ENCODE measurements at regions of chr21 and their contacts with region 1.

Region 1: DNA sequence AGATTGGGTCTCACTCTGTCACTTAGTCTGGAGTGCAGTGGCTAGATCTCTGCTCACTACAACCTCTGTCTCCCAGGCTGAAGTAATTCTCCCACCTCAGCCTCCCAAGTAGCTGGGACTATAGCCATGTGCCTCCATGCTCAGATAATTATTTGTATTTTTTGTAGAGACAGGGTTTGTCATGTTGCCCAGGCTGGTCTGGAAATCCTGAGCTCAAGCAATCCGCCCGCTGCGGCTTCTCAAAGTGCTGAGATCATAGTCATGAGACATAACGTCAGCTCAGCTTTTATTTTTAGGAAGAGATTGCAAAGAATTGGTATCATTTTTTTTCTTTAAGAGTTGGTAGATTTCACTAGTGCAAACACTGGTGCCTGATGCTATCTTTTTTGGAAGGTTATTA is 244.9 kb downstream of the DSCAM start:
- DNase-seq: no peak
- H3K4me3 ChIP-seq: no peak overlapping the region
- H3K27ac ChIP-seq: no peak overlapping the region
- H3K4me1 ChIP-seq: no peaks in the 10 kb centered on the region
- H3K27me3 ChIP-seq: no peaks in the 10 kb centered on the region
- CTCF ChIP-seq: no peak
- POLR2A ChIP-seq: no peak

Region 2: GRCh38 chr21:39221997-39222486 is 1380.0 kb before region 1 on chr21:
- intact Hi-C with region 1: no loop called
- DNase-seq: no peak
- H3K4me3 ChIP-seq: no peak overlapping the region
- H3K27ac ChIP-seq: no peak overlapping the region
- H3K4me1 ChIP-seq: no peaks in the 10 kb centered on the region
- H3K27me3 ChIP-seq: no peaks in the 10 kb centered on the region
- CTCF ChIP-seq: no peak
- POLR2A ChIP-seq: no peak

Region 3: GRCh38 chr21:40547906-40548513 is 54.1 kb before region 1 on chr21:
- intact Hi-C with region 1: loop called (anchors 10 kb)
- DNase-seq: no peak
- H3K4me3 ChIP-seq: no peak overlapping the region
- H3K27ac ChIP-seq: no peak overlapping the region
- H3K4me1 ChIP-seq: no peaks in the 10 kb centered on the region
- H3K27me3 ChIP-seq: no peaks in the 10 kb centered on the region
- CTCF ChIP-seq: no peak
- POLR2A ChIP-seq: no peak

Region 4: GRCh38 chr21:40622523-40622922 is 20.4 kb after region 1 on chr21:
- intact Hi-C with region 1: no loop called
- DNase-seq: no peak
- H3K4me3 ChIP-seq: no peak overlapping the region
- H3K27ac ChIP-seq: no peak overlapping the region
- H3K4me1 ChIP-seq: no peaks in the 10 kb centered on the region
- H3K27me3 ChIP-seq: no peaks in the 10 kb centered on the region
- CTCF ChIP-seq: no peak
- POLR2A ChIP-seq: no peak

Region 5: DNA sequence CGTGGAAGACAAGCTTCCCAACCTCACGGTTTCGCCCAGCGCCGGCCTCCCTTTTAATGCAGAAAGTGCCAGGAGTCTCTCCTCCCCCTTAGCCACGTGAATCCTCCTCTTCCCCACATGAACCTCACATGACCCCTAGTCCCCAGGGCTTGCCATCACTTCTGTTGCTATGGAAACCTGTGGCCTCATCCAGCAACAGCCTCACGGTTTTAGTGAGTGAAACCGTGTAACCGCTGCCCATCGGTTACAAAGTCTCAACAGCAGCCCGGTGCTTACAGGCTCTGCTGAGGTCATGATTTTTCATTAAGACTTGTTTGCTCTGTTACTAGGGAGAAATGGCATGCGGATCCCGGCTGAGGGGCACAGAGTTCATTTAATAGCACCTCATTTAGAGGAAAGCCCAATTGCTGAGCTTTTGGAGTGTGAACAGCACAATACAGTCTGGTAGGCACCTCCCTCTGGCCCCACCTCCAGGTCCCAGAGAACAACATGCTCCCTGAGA is 422.7 kb after region 1 on chr21:
- intact Hi-C with region 1: no loop called
- DNase-seq: no peak
- H3K4me3 ChIP-seq: no peak overlapping the region
- H3K27ac ChIP-seq: no peak overlapping the region
- H3K4me1 ChIP-seq: no peaks in the 10 kb centered on the region
- H3K27me3 ChIP-seq: no peaks in the 10 kb centered on the region
- CTCF ChIP-seq: no peak
- POLR2A ChIP-seq: no peak

Measured in prostate gland (tissue), 2 donors.